ENCODE measurements at regions of chr16 and their contacts with region 1.

Region 1: GRCh38 chr16:66020642-66021041 is 345.8 kb upstream of the CDH5 start:
- DNase-seq: no peak
- H3K4me3 ChIP-seq: no peak overlapping the region
- H3K27ac ChIP-seq: no peak overlapping the region
- H3K4me1 ChIP-seq: no peaks in the 10 kb centered on the region
- H3K27me3 ChIP-seq: no peaks in the 10 kb centered on the region
- CTCF ChIP-seq: no peak
- POLR2A ChIP-seq: no peak

Region 2: DNA sequence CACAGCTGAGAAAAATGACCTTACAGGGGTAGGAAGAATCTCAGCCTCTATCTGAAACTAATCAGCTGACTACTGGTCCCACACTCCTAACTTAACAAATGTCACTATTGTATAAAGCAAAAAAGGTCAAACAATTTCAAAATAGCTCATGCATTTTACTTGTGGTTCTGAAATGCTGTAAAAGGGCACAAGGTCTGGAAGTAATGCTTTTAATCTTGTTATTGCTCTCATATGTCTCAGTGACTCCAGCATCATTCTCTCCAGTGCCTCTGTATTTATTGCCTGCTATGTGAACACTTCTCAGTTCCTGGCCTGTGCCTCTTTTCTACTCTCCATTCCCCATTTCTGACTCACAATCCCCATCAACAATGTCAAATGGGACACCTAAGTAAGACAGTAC is 1836.5 kb before region 1 on chr16:
- intact Hi-C with region 1: loop called (anchors 5 kb)
- DNase-seq: no peak
- H3K4me3 ChIP-seq: no peak overlapping the region
- H3K27ac ChIP-seq: no peak overlapping the region
- H3K4me1 ChIP-seq: no peaks in the 10 kb centered on the region
- H3K27me3 ChIP-seq: no peaks in the 10 kb centered on the region
- CTCF ChIP-seq: no peak
- POLR2A ChIP-seq: no peak

Region 3: GRCh38 chr16:65909310-65910050 is 111.2 kb before region 1 on chr16:
- intact Hi-C with region 1: no loop called
- DNase-seq: peak in 1 of 2 donors; percentile 40
- H3K4me3 ChIP-seq: no peak overlapping the region
- H3K27ac ChIP-seq: no peak overlapping the region
- H3K4me1 ChIP-seq: no peaks in the 10 kb centered on the region
- H3K27me3 ChIP-seq: no peaks in the 10 kb centered on the region
- CTCF ChIP-seq: no peak
- POLR2A ChIP-seq: no peak

Measured in vagina (tissue), 2 donors.